ENCODE measurements at regions of chr16 and their contacts with region 1.

Region 1: GRCh38 chr16:71564155-71564967 is 12.5 kb downstream of the TAT start:
- DNase-seq: peak in 1 of 10 donors; percentile 100
- ATAC-seq: no peak
- H3K4me3 Mint-ChIP-seq: peak overlapping the region; percentile 79 to 97 (median 92)
- H3K27ac Mint-ChIP-seq: peak overlapping the region; percentile 92 to 99 (median 97)
- H3K4me1 Mint-ChIP-seq: peaks cover 11 to 26% (median 18%) of the 10 kb centered on the region in 4 donors
- H3K27me3 Mint-ChIP-seq: peaks cover 0 to 4% (median 1%) of the 10 kb centered on the region in 5 donors

Region 2: GRCh38 chr16:71373073-71373472 is 191.3 kb before region 1 on chr16:
- POLR2A ChIA-PET with region 1: no interaction called
- DNase-seq: no peak
- ATAC-seq: no peak
- H3K4me3 Mint-ChIP-seq: no peak overlapping the region
- H3K27ac Mint-ChIP-seq: no peak overlapping the region
- H3K4me1 Mint-ChIP-seq: no peaks in the 10 kb centered on the region
- H3K27me3 Mint-ChIP-seq: peaks cover 10 to 42% (median 34%) of the 10 kb centered on the region in 5 donors

Region 3: DNA sequence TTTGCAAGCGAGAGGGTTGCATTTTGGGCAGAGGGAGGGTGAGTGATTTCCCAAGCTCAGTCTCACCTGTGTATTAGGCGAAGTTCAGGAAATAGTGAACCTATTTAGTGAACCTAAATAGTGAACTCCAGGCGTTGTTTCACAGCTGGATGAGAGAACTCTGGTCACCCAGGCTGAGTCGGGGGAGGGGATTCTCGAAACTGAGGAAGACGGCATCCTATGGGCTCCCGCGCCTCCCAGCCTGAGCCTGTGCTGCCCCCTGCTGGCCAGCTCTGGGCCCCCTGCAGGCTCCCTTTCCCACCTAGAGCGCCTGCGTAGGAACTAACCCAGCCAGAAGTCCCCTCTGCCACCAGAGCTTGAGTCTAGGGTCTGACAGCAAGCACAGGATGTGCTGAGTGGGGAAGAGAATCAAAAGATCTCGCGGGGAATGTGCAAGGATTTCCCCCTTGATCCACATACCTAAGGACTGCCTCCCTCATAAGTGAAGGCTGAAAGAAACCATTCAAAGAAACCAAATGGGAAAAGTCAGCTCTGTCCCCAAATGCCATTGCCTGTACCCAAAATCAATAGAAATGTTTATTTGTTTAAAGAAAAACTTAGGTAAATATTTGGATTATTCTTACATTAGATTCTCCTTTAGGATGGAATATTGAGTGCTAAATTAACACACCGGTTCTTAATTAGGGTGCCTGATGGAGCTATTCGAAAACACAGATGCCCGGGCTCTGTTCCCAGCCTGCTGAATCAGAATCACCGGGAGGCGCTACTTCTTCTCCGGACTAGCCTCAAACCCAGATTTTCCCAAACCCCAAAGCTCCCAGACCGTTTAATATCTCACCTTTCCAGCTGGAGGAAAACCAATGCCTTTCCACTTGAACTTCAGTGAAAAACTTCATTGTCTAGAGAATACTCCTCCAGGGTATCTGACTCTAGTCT is 46.8 kb after region 1 on chr16:
- POLR2A ChIA-PET with region 1: interaction called, 22 read pairs
- DNase-seq: peak; percentile 59 to 86 (median 76)
- ATAC-seq: peak; percentile 99 to 100
- H3K4me3 Mint-ChIP-seq: no peak overlapping the region
- H3K27ac Mint-ChIP-seq: peak overlapping the region in 1 of 10 donors; percentile 56
- H3K4me1 Mint-ChIP-seq: peaks cover 0 to 6% (median 3%) of the 10 kb centered on the region in 4 donors
- H3K27me3 Mint-ChIP-seq: peaks cover 4 to 24% (median 18%) of the 10 kb centered on the region in 5 donors